ENCODE measurements at regions of chr17 and their contacts with region 1.

Region 1: DNA sequence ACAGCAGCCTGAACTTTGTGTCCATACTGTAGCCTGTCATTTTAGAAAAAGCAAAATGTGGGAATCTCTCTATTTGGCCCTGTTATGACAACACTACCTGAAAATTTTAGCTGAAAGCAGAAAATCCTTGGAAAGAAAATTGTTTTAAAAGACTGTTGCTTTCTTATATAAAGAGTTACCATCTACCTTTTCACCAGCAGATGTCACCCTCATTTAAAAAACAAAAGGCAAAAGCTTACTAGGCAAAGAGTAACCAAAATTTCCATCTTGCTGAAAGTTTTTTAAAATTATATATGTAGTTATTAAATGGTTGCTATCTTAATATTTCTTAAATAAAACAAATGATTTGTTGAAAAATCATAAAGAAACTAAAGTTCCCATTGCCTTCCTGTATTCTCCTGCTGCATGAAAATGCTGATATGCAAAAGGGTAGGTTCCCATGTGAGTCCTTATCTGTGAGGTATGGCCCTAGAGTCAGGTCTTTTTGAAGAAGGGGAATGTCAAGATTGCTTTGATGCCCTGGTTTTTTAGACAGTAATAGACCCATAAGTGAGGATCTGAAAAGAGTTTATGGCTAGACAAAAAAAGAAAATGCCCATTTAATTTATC is 61.0 kb downstream of the TNRC6C start:
- DNase-seq: no peak
- ATAC-seq: no peak
- H3K4me3 Mint-ChIP-seq: no peak overlapping the region
- H3K27ac Mint-ChIP-seq: peak overlapping the region; percentile 15
- H3K4me1 Mint-ChIP-seq: peaks cover 16% of the 10 kb centered on the region
- H3K27me3 Mint-ChIP-seq: no peaks in the 10 kb centered on the region
- CTCF ChIP-seq: no peak

Region 2: GRCh38 chr17:78032166-78032565 is 12.7 kb after region 1 on chr17:
- CTCF ChIA-PET with region 1: interaction called, 13 read pairs
- POLR2A ChIA-PET with region 1: no interaction called
- DNase-seq: no peak
- ATAC-seq: no peak
- H3K4me3 Mint-ChIP-seq: no peak overlapping the region
- H3K27ac Mint-ChIP-seq: peak overlapping the region; percentile 11; the same call in 1 of the 2 replicates
- H3K4me1 Mint-ChIP-seq: peaks cover 6% of the 10 kb centered on the region
- H3K27me3 Mint-ChIP-seq: no peaks in the 10 kb centered on the region
- CTCF ChIP-seq: no peak

Region 3: DNA sequence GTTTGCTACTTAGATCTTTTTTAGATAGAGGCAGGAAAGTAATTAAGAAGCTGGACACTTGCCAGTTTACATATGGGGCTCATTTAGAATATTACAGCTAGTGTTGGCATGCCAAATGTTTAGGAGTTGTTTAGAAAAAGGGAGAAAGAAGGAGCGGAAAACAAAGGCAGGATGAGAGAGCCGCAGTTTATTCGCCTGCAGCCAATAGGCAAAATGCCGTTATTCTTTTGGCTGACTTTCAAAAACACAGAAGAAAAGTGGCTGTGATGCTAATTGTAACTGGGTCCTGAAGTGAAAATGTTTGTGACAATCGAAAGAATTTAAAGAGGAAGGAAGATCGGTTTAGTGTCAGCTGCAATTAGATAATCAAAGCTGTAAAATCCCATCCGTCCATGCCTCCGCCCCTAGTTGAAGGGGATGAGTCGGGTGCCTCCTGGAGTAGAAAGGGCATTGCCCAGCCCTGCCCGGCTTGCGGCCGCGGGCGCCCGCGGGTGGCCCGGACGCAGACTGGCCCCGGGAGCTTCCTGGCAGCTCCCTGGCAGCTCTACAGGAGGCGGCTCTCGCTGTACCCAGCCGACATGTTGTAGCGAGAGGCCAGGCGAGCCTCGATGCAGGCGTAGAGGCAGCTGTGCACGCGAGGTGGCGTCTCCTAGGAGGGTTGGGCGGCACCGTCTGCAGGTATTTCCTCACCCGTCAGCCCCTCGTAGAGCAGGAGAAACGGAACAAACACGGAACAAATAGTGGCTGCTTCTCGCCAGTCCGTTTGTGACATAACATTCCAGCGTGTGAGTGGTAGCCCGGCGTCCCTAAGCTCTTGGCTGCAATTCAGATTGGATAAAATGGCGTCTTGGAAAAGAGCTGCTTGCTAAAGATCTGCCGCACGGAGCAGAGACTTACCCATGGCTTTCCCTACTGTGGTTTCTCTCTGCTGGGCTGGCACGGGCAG is 21.2 kb after region 1 on chr17:
- CTCF ChIA-PET with region 1: interaction called, 17 read pairs
- POLR2A ChIA-PET with region 1: no interaction called
- DNase-seq: no peak
- ATAC-seq: no peak; the same call in 1 of the 2 replicates
- H3K4me3 Mint-ChIP-seq: no peak overlapping the region
- H3K27ac Mint-ChIP-seq: peak overlapping the region; percentile 42; the same call in 1 of the 2 replicates
- H3K4me1 Mint-ChIP-seq: 0 out of 2 replicates have a peak, but pooled peaks cover 2% of the 10 kb centered on the region
- H3K27me3 Mint-ChIP-seq: no peaks in the 10 kb centered on the region
- CTCF ChIP-seq: no peak

Region 4: GRCh38 chr17:78127239-78128085 is 108.0 kb after region 1 on chr17:
- CTCF ChIA-PET with region 1: no interaction called
- POLR2A ChIA-PET with region 1: no interaction called
- DNase-seq: no peak
- ATAC-seq: peak; percentile 1; the same call in 1 of the 2 replicates
- H3K4me3 Mint-ChIP-seq: peak overlapping the region; percentile 80
- H3K27ac Mint-ChIP-seq: peak overlapping the region; percentile 41
- H3K4me1 Mint-ChIP-seq: peaks cover 26% of the 10 kb centered on the region
- H3K27me3 Mint-ChIP-seq: peaks cover 4% of the 10 kb centered on the region
- CTCF ChIP-seq: no peak